ENCODE measurements at regions of chr6 and their contacts with region 1.

Region 1: DNA sequence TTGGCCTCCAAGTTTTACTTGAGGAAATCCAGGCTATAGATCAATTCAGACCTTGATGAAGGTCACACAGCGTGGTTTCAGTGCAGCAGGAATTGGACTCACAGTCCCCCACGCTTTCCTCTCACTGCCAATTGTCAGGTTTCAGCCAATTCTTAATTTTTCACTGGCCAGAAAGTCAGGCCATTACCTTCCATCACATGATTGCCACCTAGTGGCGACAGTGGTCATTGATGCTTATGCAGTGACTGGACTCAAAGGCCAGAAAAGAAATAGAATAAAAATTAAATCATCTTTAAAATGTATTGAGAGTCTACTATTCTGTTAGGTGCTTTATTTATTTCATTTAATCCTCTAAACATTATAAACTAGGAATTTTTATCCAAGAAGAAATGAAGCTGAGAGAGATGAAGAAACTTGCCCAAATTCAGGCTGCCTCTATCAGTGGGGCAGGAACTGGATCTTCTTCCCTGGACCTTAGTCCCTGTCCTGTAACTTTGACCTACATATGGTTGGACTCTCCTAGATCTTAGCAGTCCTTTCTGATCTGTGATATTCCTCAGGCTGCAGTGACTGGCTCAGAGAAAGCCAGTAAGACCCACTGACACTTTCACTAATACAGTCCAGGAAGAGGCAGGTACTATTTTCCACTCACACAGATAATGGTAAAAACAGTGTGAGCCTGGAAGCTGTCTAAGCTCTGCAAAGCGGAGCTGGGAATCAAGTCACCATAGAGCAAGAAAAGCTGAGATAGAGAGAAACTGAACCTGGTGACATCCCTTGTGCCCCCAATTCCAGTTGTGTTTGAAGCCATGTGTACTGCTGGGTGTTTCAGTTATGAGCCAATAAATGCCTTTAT is 133.3 kb downstream of the ELOVL4 start:
- DNase-seq: peak; percentile 45 to 80 (median 50)
- ATAC-seq: peak; percentile 94
- H3K4me3 ChIP-seq: no peak overlapping the region
- H3K27ac ChIP-seq: no peak overlapping the region
- H3K4me1 ChIP-seq: no peaks in the 10 kb centered on the region
- H3K27me3 ChIP-seq: peaks cover 6 to 10% of the 10 kb centered on the region in 2 experiments; a peak in 2 of 5 replicates
- CTCF ChIP-seq: peak; percentile 74 to 89 (median 76)
- EP300 ChIP-seq: no peak
- POLR2A ChIP-seq: no peak
- RAD21 ChIP-seq: peak; percentile 85 to 86

Region 2: GRCh38 chr6:79777713-79778579 is 36.1 kb before region 1 on chr6:
- CTCF ChIA-PET with region 1: interaction called, 5 read pairs
- POLR2A ChIA-PET with region 1: interaction called, 3 read pairs
- in situ Hi-C with region 1: no loop called
- intact Hi-C with region 1: loop called (anchors 1 kb)
- DNase-seq: peak; percentile 89 to 95 (median 92)
- ATAC-seq: peak; percentile 98
- H3K4me3 ChIP-seq: peak overlapping the region; percentile 26
- H3K27ac ChIP-seq: no peak overlapping the region
- H3K4me1 ChIP-seq: peaks cover 0 to 6% of the 10 kb centered on the region in 2 experiments; a peak in 3 of 5 replicates
- H3K27me3 ChIP-seq: no peaks in the 10 kb centered on the region; a peak in 1 of 5 replicates
- CTCF ChIP-seq: peak; percentile 92 to 95 (median 93)
- EP300 ChIP-seq: no peak
- POLR2A ChIP-seq: no peak
- RAD21 ChIP-seq: peak; percentile 85 to 87

Region 3: GRCh38 chr6:79864001-79864400 is 49.9 kb after region 1 on chr6:
- CTCF ChIA-PET with region 1: interaction called, 3 read pairs
- POLR2A ChIA-PET with region 1: no interaction called
- in situ Hi-C with region 1: no loop called
- intact Hi-C with region 1: loop called (anchors 1 kb)
- DNase-seq: no peak
- ATAC-seq: no peak
- H3K4me3 ChIP-seq: no peak overlapping the region
- H3K27ac ChIP-seq: no peak overlapping the region
- H3K4me1 ChIP-seq: peaks cover 0 to 4% of the 10 kb centered on the region in 2 experiments; a peak in 1 of 5 replicates
- H3K27me3 ChIP-seq: peaks cover 0 to 6% of the 10 kb centered on the region in 2 experiments; a peak in 2 of 5 replicates
- CTCF ChIP-seq: no peak
- EP300 ChIP-seq: no peak
- POLR2A ChIP-seq: no peak
- RAD21 ChIP-seq: no peak

Measured in K562 (cell line).